HepG2 (cell line): ENCODE measurements at regions of chr5 and their contacts with region 1.

Region 1: DNA sequence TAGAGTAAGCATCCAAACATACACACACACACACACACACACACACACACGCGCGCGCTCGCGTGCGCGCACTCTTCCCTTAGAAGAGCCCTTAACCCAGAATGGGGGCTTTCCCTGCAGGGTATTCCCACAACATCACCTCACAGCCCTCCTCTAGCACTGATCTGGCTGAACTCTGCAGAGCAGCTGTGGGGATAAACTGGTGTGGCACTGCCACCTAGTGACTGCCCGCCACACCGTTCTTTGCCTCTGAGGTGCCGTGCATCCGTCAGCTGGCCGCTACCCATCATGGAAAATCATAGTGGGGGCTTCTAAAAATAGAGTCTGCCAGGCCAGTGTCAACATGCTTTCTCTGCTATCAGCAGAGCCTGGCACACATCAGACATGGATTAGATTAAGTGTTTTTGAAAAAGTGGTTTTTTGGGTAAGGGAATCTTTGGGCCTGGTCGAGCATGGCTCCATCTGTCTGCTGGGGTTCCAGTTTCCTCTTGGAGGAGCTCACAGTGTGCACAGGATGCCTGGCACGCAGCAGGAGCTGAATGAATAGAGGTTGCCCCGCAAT is 88.1 kb downstream of the KCNN2 start:
- DNase-seq: peak; percentile 25
- ATAC-seq: peak; percentile 100
- H3K4me3 ChIP-seq: no peak overlapping the region
- H3K27ac ChIP-seq: no peak overlapping the region
- H3K4me1 ChIP-seq: no peaks in the 10 kb centered on the region
- H3K27me3 ChIP-seq: peaks cover 0 to 5% of the 10 kb centered on the region in 2 experiments; a peak in 1 of 5 replicates
- CTCF ChIP-seq: peak; percentile 89
- EP300 ChIP-seq: no peak
- POLR2A ChIP-seq: no peak
- RAD21 ChIP-seq: peak; percentile 73

Region 2: DNA sequence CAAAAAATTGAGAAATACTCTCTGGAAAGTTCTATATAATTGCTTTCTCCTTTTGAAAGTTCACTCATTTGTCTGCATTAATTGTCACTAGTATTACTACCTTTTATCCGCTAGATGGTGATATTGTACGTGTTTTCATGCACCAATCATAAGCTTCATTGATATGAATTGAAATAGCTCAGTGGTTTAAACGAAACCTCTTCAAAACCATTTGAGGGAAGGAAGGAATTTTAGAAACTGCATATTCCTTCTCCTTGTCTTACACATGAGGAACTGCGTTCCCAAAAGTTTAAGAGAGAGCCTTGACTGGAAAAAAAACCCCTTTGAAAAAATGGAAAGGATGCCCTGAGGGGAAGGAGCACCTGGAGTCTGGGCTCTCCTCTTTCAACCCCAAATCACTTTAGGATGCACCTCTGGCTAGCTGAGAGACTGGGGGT is 837.9 kb before region 1 on chr5:
- CTCF ChIA-PET with region 1: interaction called, 13 read pairs
- POLR2A ChIA-PET with region 1: no interaction called
- in situ Hi-C with region 1: loop called (anchors 5 kb)
- intact Hi-C with region 1: no loop called
- DNase-seq: peak; percentile 7
- ATAC-seq: peak; percentile 66
- H3K4me3 ChIP-seq: no peak overlapping the region
- H3K27ac ChIP-seq: no peak overlapping the region
- H3K4me1 ChIP-seq: no peaks in the 10 kb centered on the region
- H3K27me3 ChIP-seq: 0 out of 5 replicates have a peak, but pooled peaks cover 0 to 2% of the 10 kb centered on the region in 2 experiments
- CTCF ChIP-seq: peak; percentile 70
- EP300 ChIP-seq: no peak
- POLR2A ChIP-seq: no peak
- RAD21 ChIP-seq: no peak

Region 3: GRCh38 chr5:113678924-113679575 is 770.9 kb before region 1 on chr5:
- CTCF ChIA-PET with region 1: interaction called, 9 read pairs
- POLR2A ChIA-PET with region 1: no interaction called
- in situ Hi-C with region 1: loop called (anchors 10 kb)
- intact Hi-C with region 1: loop called (anchors 1 kb)
- DNase-seq: peak; percentile 30
- ATAC-seq: peak; percentile 76
- H3K4me3 ChIP-seq: no peak overlapping the region
- H3K27ac ChIP-seq: no peak overlapping the region
- H3K4me1 ChIP-seq: no peaks in the 10 kb centered on the region
- H3K27me3 ChIP-seq: no peaks in the 10 kb centered on the region
- CTCF ChIP-seq: peak; percentile 75
- EP300 ChIP-seq: no peak
- POLR2A ChIP-seq: no peak
- RAD21 ChIP-seq: peak; percentile 39; the same call in 1 of the 2 replicates

Region 4: DNA sequence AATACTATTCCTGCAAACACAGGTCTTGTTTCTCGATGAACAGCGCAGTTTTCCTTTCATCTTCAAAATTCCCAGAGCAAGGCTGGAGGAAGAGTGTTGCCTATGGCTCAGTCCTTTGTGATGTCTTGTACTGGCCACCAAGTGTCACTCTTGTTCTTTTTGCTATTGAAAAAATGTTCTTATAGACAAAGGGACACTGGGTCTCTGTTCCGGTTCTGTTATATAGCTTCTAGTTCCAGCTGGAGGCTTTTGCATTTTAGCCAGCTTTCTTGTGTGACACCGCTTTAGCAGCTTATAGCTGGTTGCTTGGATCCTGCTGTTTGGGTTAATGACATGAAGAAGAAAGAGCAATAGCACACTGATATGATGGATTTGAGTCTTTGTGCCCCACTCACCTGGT is 431.8 kb before region 1 on chr5:
- CTCF ChIA-PET with region 1: no interaction called
- POLR2A ChIA-PET with region 1: no interaction called
- in situ Hi-C with region 1: no loop called
- intact Hi-C with region 1: loop called (anchors 5 kb)
- DNase-seq: peak; percentile 1
- ATAC-seq: peak; percentile 64; the same call in 2 of the 3 replicates
- H3K4me3 ChIP-seq: no peak overlapping the region
- H3K27ac ChIP-seq: no peak overlapping the region
- H3K4me1 ChIP-seq: no peaks in the 10 kb centered on the region
- H3K27me3 ChIP-seq: no peaks in the 10 kb centered on the region
- CTCF ChIP-seq: peak; percentile 34; the same call in 1 of the 2 replicates
- EP300 ChIP-seq: no peak
- POLR2A ChIP-seq: no peak
- RAD21 ChIP-seq: no peak

Region 5: DNA sequence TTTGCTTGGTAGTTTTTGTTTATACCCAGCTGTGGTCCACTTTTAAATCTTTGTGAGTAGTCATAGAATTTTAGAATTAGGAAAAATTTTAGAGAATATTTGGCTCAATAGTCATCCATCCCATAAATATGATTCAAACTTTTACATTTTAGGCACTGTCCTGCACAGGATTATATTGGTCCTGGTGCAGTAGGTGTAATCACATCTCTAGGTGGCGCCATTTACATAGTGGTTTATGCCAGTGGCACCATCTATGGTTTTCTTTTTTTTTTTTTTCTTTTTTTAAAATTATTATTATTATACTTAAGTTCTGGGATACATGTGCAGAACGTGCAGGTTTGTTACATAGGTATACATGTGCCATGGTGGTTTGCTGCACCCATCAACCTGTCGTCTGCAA is 348.8 kb before region 1 on chr5:
- CTCF ChIA-PET with region 1: no interaction called
- POLR2A ChIA-PET with region 1: no interaction called
- in situ Hi-C with region 1: loop called (anchors 25 kb)
- intact Hi-C with region 1: no loop called
- DNase-seq: peak; percentile 15
- ATAC-seq: peak; percentile 55; the same call in 2 of the 3 replicates
- H3K4me3 ChIP-seq: no peak overlapping the region
- H3K27ac ChIP-seq: no peak overlapping the region
- H3K4me1 ChIP-seq: no peaks in the 10 kb centered on the region
- H3K27me3 ChIP-seq: no peaks in the 10 kb centered on the region
- CTCF ChIP-seq: peak; percentile 45
- EP300 ChIP-seq: no peak
- POLR2A ChIP-seq: no peak
- RAD21 ChIP-seq: no peak